A673 (cell line): ENCODE measurements at regions of chr10 and their contacts with region 1.

Region 1: DNA sequence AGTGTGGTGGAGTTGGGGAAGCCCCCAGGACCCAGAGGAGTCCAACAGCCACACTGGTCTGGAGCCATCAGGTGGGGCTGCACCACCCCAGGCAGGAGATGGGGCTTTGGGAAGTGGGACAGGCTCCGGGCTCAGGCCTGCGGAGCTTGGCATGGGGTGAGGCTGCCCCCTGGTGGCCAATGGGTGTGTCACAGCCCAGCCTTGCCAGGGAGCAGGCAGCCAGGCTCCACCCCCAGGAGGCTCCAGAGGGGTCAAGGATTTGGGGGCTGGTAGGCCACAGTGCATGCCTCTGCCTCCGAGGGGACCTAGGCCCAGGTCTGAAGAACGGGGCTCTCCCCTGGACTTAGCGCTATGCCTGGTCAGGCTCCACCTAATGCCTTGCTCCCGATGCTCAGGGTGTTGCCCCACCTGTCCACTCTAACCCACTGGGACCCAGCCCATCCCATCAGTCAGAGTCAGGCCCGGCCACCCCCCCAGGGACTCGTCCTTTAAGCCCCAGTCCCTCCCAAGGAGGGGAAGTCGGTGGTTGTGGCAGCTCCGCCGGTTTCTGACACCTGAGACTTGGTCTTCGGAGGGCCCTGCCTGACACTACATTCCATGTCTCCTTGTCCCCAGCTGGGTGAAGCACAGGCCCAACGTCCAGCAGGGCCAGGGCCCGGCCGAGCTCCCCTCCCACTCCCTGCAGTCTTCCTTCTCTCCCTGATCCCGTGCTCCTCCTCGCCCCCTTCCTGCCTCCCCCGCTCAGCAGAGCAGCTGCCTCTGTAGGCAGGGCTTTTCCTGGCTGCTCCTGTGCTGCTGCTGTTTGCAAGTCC is 11.3 kb upstream of the SAMD8 start:
- DNase-seq: peak; percentile 80
- H3K4me3 ChIP-seq: no peak overlapping the region
- H3K27ac ChIP-seq: no peak overlapping the region
- H3K4me1 ChIP-seq: peaks cover 5% of the 10 kb centered on the region
- H3K27me3 ChIP-seq: no peaks in the 10 kb centered on the region
- CTCF ChIP-seq: peak; percentile 95

Region 2: DNA sequence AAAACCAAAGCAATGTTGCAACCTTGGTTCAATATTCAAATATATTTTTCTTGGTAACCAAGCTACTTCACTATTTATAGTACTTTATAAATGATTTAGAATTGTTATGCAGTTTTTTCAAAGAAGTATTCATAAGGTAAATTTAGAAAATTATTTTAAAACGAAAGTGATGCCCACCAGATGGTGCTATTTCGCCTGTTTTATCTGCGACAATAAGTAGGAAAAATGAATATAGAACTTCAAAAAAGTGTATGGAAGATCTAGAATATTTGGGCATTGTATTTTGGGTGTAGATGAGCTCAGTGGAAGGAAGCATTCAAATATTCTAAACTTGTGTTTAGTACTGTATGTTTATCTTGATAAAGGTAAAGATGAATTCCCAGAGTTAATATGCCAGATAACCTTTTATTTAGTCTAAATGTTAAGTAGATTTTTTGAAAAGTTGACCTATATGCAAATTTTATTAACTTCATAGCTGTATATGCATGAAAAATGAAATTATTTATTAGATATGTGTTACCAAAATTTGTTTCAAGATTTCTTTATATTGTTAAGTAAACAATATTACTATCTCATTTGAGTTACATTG is 856.0 kb before region 1 on chr10:
- CTCF ChIA-PET with region 1: no interaction called
- POLR2A ChIA-PET with region 1: no interaction called
- intact Hi-C with region 1: loop called (anchors 1 kb)
- DNase-seq: peak; percentile 71
- H3K4me3 ChIP-seq: no peak overlapping the region
- H3K27ac ChIP-seq: no peak overlapping the region
- H3K4me1 ChIP-seq: peaks cover 10% of the 10 kb centered on the region
- H3K27me3 ChIP-seq: no peaks in the 10 kb centered on the region
- CTCF ChIP-seq: peak; percentile 68

Region 3: DNA sequence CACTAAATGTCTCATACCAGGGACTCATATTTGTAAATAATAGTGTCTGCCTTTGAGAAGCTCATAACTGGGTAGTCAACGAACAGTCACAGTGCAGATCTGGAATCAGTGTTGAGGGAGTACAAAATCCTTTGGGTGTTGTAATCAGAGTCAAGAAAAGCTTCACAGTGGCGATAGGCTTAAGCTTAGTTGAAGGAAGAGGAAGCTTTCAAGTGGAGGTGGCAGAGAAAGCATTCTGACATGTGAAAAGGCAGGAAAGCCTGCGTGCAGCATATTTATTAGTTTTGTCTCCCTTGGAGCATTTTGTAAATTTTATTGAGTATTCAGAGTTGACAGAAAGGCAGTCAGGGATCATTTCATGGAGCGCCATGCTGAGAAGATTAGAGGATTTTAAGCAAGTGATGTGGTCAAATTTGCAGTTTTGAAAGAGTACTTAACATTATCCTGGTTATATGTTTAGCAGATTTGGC is 844.2 kb before region 1 on chr10:
- CTCF ChIA-PET with region 1: no interaction called
- POLR2A ChIA-PET with region 1: no interaction called
- intact Hi-C with region 1: loop called (anchors 5 kb)
- DNase-seq: peak; percentile 96
- H3K4me3 ChIP-seq: no peak overlapping the region
- H3K27ac ChIP-seq: peak overlapping the region; percentile 27
- H3K4me1 ChIP-seq: peaks cover 38% of the 10 kb centered on the region
- H3K27me3 ChIP-seq: no peaks in the 10 kb centered on the region
- CTCF ChIP-seq: no peak

Region 4: GRCh38 chr10:74262856-74263255 is 837.3 kb before region 1 on chr10:
- CTCF ChIA-PET with region 1: interaction called, 3 read pairs
- POLR2A ChIA-PET with region 1: no interaction called
- intact Hi-C with region 1: loop called (anchors 2 kb)
- DNase-seq: no peak
- H3K4me3 ChIP-seq: no peak overlapping the region
- H3K27ac ChIP-seq: no peak overlapping the region
- H3K4me1 ChIP-seq: peaks cover 6% of the 10 kb centered on the region
- H3K27me3 ChIP-seq: no peaks in the 10 kb centered on the region
- CTCF ChIP-seq: no peak

Region 5: GRCh38 chr10:74748468-74749031 is 351.6 kb before region 1 on chr10:
- CTCF ChIA-PET with region 1: no interaction called
- POLR2A ChIA-PET with region 1: no interaction called
- intact Hi-C with region 1: loop called (anchors 10 kb)
- DNase-seq: no peak
- H3K4me3 ChIP-seq: no peak overlapping the region
- H3K27ac ChIP-seq: no peak overlapping the region
- H3K4me1 ChIP-seq: no peaks in the 10 kb centered on the region
- H3K27me3 ChIP-seq: no peaks in the 10 kb centered on the region
- CTCF ChIP-seq: no peak

Region 6: DNA sequence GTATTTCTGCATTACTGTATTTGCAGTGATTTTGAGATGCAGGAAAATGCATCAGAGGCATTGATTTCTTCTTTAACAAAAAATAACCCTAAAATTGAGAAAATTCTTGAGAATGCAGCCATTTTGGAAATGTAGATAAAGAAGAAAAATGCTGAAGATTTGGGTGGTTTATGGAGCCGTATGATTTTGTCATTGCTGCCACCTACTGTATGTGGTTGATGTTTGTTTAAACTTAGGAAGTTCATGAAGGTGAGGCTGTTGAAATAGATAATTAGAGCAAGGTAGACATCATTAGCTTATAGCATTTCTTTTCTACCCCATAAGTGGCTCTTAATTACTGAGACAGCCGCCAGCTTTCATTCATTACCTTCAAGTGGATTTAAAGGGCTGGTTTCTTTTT is 80.8 kb before region 1 on chr10:
- CTCF ChIA-PET with region 1: no interaction called
- POLR2A ChIA-PET with region 1: no interaction called
- intact Hi-C with region 1: loop called (anchors 2 kb)
- DNase-seq: peak; percentile 61
- H3K4me3 ChIP-seq: no peak overlapping the region
- H3K27ac ChIP-seq: no peak overlapping the region
- H3K4me1 ChIP-seq: peaks cover 22% of the 10 kb centered on the region
- H3K27me3 ChIP-seq: no peaks in the 10 kb centered on the region
- CTCF ChIP-seq: peak; percentile 63

Region 7: DNA sequence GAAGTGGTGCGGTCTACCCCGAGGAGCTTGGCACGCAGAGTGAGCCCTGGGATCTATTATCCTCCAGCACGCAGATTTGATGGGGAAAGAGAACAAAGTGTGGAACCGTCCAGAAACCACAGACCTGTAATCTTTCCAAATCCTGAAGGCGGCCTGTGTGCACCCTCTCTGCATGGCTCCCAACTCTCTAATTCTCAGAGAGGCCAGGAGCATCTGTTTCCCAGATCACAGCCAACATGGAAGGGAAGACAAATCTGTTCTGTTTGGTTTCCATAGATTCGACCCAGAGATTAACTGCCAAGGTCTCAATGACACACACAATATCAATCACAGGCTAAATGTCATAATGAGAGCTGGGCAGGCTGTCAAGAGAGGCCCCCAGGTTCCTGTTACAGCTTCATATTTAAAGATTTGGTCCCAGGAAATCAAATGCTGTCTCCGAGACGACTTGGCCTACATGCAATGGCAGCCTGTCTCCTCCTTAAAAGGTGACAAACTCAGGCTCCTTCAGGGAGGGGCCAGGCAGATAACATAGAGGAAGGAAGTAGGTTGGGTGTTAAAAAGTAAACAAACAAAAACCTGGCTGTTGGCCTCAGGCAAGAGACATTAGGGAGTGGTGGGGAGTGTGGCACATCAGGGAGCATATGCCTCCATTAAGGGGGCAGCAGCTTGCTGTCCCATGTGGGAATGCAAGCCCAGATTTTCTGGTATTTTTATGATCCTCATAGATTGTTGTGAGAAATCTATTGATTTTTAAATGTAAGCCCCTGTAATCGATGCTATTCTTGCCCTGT is 37.5 kb before region 1 on chr10:
- CTCF ChIA-PET with region 1: no interaction called
- POLR2A ChIA-PET with region 1: no interaction called
- intact Hi-C with region 1: no loop called
- DNase-seq: peak; percentile 14
- H3K4me3 ChIP-seq: no peak overlapping the region
- H3K27ac ChIP-seq: no peak overlapping the region
- H3K4me1 ChIP-seq: no peaks in the 10 kb centered on the region
- H3K27me3 ChIP-seq: no peaks in the 10 kb centered on the region
- CTCF ChIP-seq: no peak

Region 8: DNA sequence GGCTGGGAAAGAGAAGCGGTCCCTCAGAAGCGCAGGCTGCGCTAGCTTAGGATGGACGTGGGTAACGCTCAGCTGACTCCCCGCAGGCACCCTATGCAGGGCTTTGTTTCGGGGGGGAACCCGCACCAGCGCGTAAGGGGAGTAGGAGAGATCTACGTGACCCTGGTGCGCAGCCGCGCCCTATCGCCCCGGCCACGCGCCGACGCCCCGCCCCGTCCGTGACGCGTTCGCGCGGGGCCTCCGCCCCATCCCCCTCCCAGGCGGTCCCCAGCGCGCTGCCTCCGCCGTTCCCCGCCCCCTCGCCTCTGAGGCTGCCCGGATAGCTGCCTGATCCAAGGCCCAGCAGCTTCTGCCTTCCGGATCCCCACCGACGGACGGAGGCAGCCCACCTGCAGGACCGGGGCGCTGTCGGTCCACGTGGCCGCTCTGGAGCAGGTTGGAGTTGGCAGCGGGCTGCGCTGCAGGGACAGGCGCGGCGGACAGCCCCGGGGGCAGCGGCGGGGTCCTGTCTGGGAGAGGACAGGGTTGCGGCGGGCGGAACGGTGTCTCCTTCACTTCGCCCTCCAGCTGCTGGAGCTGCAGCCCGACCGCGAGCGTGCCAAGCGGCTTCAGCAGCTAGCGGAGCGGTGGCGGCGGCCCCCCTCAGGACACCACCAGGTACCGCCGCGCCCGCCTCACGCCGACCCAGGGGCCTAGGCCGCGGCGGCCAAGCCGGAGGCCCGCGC is 110.3 kb after region 1 on chr10 and contains the start of gene VDAC2:
- CTCF ChIA-PET with region 1: interaction called, 13 read pairs
- POLR2A ChIA-PET with region 1: no interaction called
- intact Hi-C with region 1: no loop called
- DNase-seq: peak; percentile 93
- H3K4me3 ChIP-seq: peak within 1 kb of the TSS; percentile 99
- H3K27ac ChIP-seq: peak within 1 kb of the TSS; percentile 100
- H3K4me1 ChIP-seq: peaks cover 11% of the 10 kb centered on the region
- H3K27me3 ChIP-seq: no peaks in the 10 kb centered on the region
- CTCF ChIP-seq: no peak
- total RNA-seq, gene VDAC2: 307 and 328 TPM in 2 replicates